Left ventricle myocardium superior (tissue), 1 donor: ENCODE measurements at regions of chr2 and their contacts with region 1.

Region 1: DNA sequence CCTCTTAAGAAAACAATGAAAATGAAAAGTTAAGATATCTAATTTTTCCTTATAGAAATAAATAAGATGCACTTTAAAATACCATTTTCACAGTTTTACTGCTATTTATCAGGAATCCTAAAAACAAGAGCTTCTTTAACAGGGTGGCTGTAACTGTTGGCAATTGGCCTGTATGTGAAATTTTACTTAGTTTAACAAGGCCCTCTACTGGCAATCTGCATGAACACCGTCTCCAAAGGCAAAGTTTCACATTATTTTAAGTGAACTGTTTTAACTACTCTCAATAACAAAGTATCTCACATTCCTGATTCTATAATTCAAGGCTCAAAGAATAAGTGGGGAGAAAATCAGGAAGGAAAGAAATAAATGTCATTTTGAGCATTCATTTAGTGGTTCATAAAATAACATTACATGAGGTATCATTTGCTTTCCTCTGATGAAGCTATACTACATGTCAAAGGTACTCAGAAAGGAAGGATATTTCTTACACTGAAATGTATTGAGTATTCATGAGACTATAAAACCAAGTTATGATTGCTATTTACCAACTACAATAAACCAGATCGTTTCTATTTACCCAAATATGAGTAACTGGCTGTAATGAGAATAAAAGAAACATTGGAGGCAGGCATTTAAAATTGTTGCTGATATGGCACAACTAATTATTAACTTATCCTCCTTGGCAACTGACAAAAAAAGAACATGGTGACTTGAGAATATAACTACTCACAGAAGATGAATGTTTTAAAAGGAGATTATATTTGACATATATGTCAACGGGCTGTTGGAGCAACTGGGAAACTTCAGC is 7.0 kb downstream of the NCKAP5 start:
- DNase-seq: no peak
- ATAC-seq: peak; percentile 30

Region 2: GRCh38 chr2:133421516-133422312 is 139.5 kb before region 1 on chr2:
- intact Hi-C with region 1: loop called (anchors 10 kb)
- DNase-seq: peak; percentile 41
- ATAC-seq: peak; percentile 96

Region 3: DNA sequence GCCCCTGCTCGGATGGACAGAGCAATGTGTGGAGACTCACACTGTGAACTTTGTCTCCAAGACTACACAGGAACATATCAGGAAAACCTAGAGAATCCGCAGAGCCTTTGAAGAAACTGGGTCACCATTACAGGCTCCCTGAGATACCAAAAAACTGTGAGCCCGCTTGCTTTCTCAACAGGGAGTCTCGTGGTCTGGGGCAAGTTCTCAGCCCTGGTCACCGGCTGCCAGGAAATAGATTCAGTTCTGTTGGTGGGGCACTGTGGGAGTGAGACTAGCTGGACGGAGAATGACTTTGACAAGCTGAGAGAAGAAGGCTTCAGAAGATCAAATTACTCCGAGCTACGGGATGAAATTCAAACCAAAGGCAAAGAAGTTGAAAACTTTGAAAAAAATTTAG is 52.8 kb after region 1 on chr2:
- intact Hi-C with region 1: no loop called
- DNase-seq: no peak
- ATAC-seq: no peak